PC-9 (cell line): ENCODE measurements at regions of chr7 and their contacts with region 1.

Region 1: DNA sequence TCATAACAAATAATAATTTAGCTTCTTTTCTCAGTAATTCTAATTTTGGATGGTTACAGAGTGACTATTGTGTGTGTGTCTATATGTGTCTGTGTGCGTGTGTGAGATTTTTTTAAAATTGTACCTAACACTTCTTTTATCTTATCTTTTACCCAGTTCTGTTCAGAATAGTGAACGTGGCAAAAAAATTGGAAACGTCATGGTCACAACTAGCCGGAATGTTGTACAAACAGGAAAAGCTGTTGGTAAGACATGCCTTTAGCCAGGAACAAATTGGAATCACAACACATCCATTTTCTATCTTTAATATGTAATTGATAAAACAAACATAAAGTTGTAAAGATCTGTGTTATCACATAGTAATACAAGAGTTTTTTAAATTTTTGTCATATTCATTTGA is 85.4 kb downstream of the AVL9 start:
- DNase-seq: no peak
- H3K4me3 ChIP-seq: no peak overlapping the region
- H3K27ac ChIP-seq: no peak overlapping the region
- H3K4me1 ChIP-seq: no peaks in the 10 kb centered on the region
- H3K27me3 ChIP-seq: no peaks in the 10 kb centered on the region
- CTCF ChIP-seq: no peak

Region 2: GRCh38 chr7:32506266-32507054 is 74.2 kb before region 1 on chr7:
- CTCF ChIA-PET with region 1: no interaction called
- POLR2A ChIA-PET with region 1: no interaction called
- intact Hi-C with region 1: no loop called
- DNase-seq: peak in 1 of 2 experiments; percentile 32
- H3K4me3 ChIP-seq: no peak overlapping the region
- H3K27ac ChIP-seq: no peak overlapping the region
- H3K4me1 ChIP-seq: peaks cover 11% of the 10 kb centered on the region
- H3K27me3 ChIP-seq: no peaks in the 10 kb centered on the region
- CTCF ChIP-seq: no peak

Region 3: DNA sequence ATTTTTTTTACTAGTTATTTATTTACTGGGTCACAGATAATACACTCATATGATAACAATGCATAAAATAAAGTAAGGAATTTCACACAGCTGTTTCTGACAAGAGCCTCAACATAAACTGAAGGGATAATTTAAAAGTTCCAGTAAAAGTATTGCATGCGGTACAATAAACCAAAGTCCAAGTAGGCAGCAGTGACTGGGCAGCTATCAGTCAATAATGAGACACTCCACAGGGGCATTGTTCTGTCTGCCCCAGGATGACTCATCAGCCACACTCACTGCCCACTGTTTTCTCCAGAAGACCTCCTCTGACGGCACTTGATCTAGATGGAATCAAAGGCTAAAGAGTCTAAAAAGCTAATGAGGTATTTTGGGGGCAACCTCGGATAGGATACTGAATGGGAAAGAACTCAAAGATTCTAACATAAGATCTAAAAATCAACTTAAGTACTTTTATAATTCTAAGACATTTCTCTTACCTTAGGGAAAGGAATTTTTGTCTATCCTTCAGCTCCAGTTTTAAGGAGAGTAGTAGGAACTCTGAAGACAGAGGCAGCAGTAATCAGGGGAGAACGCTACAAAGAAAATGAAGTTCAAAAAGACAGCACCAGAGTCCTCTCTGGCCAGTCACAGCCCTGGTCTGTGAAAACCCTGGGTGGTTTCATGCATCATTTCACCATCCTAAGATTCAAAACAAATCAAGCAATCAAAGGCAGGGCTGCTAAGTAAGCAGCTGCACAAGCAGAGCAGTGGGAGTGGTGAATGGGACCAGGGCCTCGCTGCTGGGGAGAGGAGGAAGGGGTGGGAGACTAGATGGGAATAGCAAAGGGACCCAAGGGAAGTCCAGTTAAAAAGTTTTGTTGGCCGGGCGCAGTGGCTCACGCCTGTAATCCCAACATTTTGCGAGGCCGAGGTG is 89.7 kb after region 1 on chr7:
- CTCF ChIA-PET with region 1: no interaction called
- POLR2A ChIA-PET with region 1: interaction called, 14 read pairs
- intact Hi-C with region 1: no loop called
- DNase-seq: peak; percentile 70 to 87
- H3K4me3 ChIP-seq: peak overlapping the region; percentile 36; the same call in 1 of the 2 replicates
- H3K27ac ChIP-seq: peak overlapping the region; percentile 97
- H3K4me1 ChIP-seq: peaks cover 56% of the 10 kb centered on the region
- H3K27me3 ChIP-seq: no peaks in the 10 kb centered on the region
- CTCF ChIP-seq: no peak